HEK293 (cell line): ENCODE measurements at regions of chr18 and their contacts with region 1.

Region 1: GRCh38 chr18:54671291-54671881 is 80.3 kb downstream of the DYNAP start:
- H3K4me3 ChIP-seq: no peak overlapping the region
- H3K27ac ChIP-seq: no peak overlapping the region
- H3K4me1 ChIP-seq: no peaks in the 10 kb centered on the region
- CTCF ChIP-seq: no peak

Region 2: GRCh38 chr18:54392543-54393023 is 278.8 kb before region 1 on chr18:
- CTCF ChIA-PET with region 1: interaction called, 16 read pairs
- POLR2A ChIA-PET with region 1: interaction called, 3 read pairs
- H3K4me3 ChIP-seq: no peak overlapping the region
- H3K27ac ChIP-seq: no peak overlapping the region
- H3K4me1 ChIP-seq: no peaks in the 10 kb centered on the region
- CTCF ChIP-seq: peak; percentile 43; the same call in 1 of the 2 replicates

Region 3: GRCh38 chr18:54444319-54444914 is 227.0 kb before region 1 on chr18:
- CTCF ChIA-PET with region 1: interaction called, 98 read pairs
- POLR2A ChIA-PET with region 1: no interaction called
- H3K4me3 ChIP-seq: no peak overlapping the region
- H3K27ac ChIP-seq: no peak overlapping the region
- H3K4me1 ChIP-seq: no peaks in the 10 kb centered on the region
- CTCF ChIP-seq: peak; percentile 41; the same call in 1 of the 2 replicates

Region 4: GRCh38 chr18:54558609-54559585 is 112.5 kb before region 1 on chr18:
- CTCF ChIA-PET with region 1: interaction called, 12 read pairs
- POLR2A ChIA-PET with region 1: interaction called, 4 read pairs
- H3K4me3 ChIP-seq: no peak overlapping the region
- H3K27ac ChIP-seq: no peak overlapping the region
- H3K4me1 ChIP-seq: no peaks in the 10 kb centered on the region
- CTCF ChIP-seq: no peak

Region 5: GRCh38 chr18:54983041-54983686 is 311.8 kb after region 1 on chr18:
- CTCF ChIA-PET with region 1: interaction called, 17 read pairs
- POLR2A ChIA-PET with region 1: no interaction called
- H3K4me3 ChIP-seq: no peak overlapping the region
- H3K27ac ChIP-seq: no peak overlapping the region
- H3K4me1 ChIP-seq: peaks cover 3% of the 10 kb centered on the region; the same call in 1 of the 2 replicates
- CTCF ChIP-seq: peak; percentile 45; the same call in 1 of the 2 replicates